HepG2 (cell line): ENCODE measurements at regions of chr3 and their contacts with region 1.

Region 1: DNA sequence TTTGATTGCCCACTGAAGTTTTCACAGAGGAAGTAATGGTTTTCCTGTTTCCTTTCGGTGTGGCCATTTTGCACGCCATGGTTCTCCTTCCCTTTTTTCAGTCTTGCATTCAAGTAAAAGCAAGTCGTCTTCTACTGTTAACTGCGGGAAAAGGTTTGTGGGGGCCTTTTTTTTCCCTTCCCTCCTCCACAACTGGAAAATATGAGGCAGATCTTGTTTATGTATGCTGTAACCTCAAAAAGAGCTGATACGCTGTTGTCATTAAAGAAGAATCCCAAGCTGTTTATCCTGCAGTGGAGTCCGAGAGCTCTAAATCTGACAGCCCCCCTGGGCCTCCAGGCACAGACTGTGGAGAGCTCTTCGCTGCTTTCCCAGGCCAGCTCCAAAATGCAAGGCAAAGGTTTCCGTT is 40.4 kb downstream of the FILIP1L start:
- DNase-seq: no peak
- ATAC-seq: no peak
- H3K4me3 ChIP-seq: no peak overlapping the region
- H3K27ac ChIP-seq: peak overlapping the region; percentile 97
- H3K4me1 ChIP-seq: peaks cover 92% of the 10 kb centered on the region
- H3K27me3 ChIP-seq: no peaks in the 10 kb centered on the region
- CTCF ChIP-seq: no peak
- EP300 ChIP-seq: no peak
- POLR2A ChIP-seq: no peak
- RAD21 ChIP-seq: no peak

Region 2: GRCh38 chr3:99875929-99876841 is 197.7 kb before region 1 on chr3:
- CTCF ChIA-PET with region 1: no interaction called
- POLR2A ChIA-PET with region 1: interaction called, 21 read pairs
- in situ Hi-C with region 1: no loop called
- intact Hi-C with region 1: no loop called
- DNase-seq: peak; percentile 74
- ATAC-seq: peak; percentile 99
- H3K4me3 ChIP-seq: peak overlapping the region; percentile 73 to 92 (median 83)
- H3K27ac ChIP-seq: peak overlapping the region; percentile 86
- H3K4me1 ChIP-seq: peaks cover 44% of the 10 kb centered on the region
- H3K27me3 ChIP-seq: no peaks in the 10 kb centered on the region; a peak in 1 of 5 replicates
- CTCF ChIP-seq: peak; percentile 64
- EP300 ChIP-seq: peak in 1 of 2 experiments; percentile 37; a peak in 2 of 4 replicates
- POLR2A ChIP-seq: peak; percentile 88 to 95
- RAD21 ChIP-seq: peak; percentile 86

Region 3: GRCh38 chr3:99920481-99921376 is 153.2 kb before region 1 on chr3:
- CTCF ChIA-PET with region 1: no interaction called
- POLR2A ChIA-PET with region 1: interaction called, 14 read pairs
- in situ Hi-C with region 1: no loop called
- intact Hi-C with region 1: no loop called
- DNase-seq: peak; percentile 97
- ATAC-seq: peak; percentile 89
- H3K4me3 ChIP-seq: peak overlapping the region in 2 of 3 experiments; percentile 17 to 42; a peak in 1 of 6 replicates
- H3K27ac ChIP-seq: peak overlapping the region; percentile 94
- H3K4me1 ChIP-seq: peaks cover 100% of the 10 kb centered on the region
- H3K27me3 ChIP-seq: no peaks in the 10 kb centered on the region
- CTCF ChIP-seq: peak; percentile 47
- EP300 ChIP-seq: peak; percentile 39 to 95; a peak in 3 of 4 replicates
- POLR2A ChIP-seq: peak; percentile 28 to 58; a peak in 2 of 4 replicates
- RAD21 ChIP-seq: no peak

Region 4: GRCh38 chr3:100060685-100061484 is 13.0 kb before region 1 on chr3:
- CTCF ChIA-PET with region 1: no interaction called
- POLR2A ChIA-PET with region 1: interaction called, 27 read pairs
- in situ Hi-C with region 1: no loop called
- intact Hi-C with region 1: no loop called
- DNase-seq: no peak
- ATAC-seq: no peak
- H3K4me3 ChIP-seq: no peak overlapping the region
- H3K27ac ChIP-seq: no peak overlapping the region
- H3K4me1 ChIP-seq: peaks cover 71% of the 10 kb centered on the region
- H3K27me3 ChIP-seq: no peaks in the 10 kb centered on the region
- CTCF ChIP-seq: no peak
- EP300 ChIP-seq: no peak
- POLR2A ChIP-seq: no peak
- RAD21 ChIP-seq: no peak

Region 5: GRCh38 chr3:100097919-100098783 is 24.2 kb after region 1 on chr3:
- CTCF ChIA-PET with region 1: no interaction called
- POLR2A ChIA-PET with region 1: interaction called, 14 read pairs
- in situ Hi-C with region 1: no loop called
- intact Hi-C with region 1: no loop called
- DNase-seq: peak; percentile 80
- ATAC-seq: peak; percentile 99
- H3K4me3 ChIP-seq: peak overlapping the region in 1 of 3 experiments; percentile 29; a peak in 1 of 6 replicates
- H3K27ac ChIP-seq: peak overlapping the region; percentile 84
- H3K4me1 ChIP-seq: peaks cover 52% of the 10 kb centered on the region
- H3K27me3 ChIP-seq: no peaks in the 10 kb centered on the region
- CTCF ChIP-seq: no peak
- EP300 ChIP-seq: peak in 1 of 2 experiments; percentile 67; a peak in 2 of 4 replicates
- POLR2A ChIP-seq: no peak
- RAD21 ChIP-seq: no peak

Region 6: DNA sequence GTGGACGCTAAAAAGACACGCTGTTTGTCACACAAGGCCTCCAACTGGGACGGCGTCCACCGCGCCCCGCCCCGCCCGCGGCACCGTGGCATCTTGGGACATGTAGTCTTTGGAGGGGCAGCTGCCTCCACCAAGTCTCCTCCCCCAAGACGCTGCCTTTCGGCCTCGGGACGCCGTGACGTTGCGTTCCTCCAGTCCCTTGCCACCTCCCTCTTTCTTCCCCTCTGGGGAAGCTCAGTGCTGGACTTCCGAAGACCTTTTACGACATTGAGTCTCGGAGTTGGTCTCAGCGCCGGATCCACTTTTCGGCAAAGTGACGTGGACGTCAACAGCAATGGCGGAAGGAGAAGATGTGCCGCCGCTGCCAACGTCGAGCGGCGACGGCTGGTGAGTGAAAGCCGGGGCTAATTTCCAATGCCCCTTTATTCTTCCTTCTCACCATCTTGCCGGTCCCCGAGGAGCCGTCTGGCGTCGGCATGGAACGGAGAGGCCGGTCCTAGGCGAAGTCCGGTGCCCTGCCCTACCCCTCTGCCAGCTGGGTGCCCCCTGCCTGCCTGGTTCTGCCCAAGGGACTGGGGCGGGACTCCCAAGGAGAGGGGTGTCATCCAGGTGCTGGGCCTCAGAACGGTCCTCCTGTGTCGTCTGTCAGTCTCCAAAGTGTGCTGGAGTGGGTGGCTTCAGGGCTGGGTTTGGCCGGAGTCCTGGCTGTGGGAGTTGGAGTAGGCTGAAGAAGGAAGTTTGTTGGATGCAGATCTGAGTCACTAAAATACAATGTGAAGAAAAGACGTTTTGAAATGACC is 187.0 kb after region 1 on chr3 and contains the start of gene TBC1D23:
- CTCF ChIA-PET with region 1: no interaction called
- POLR2A ChIA-PET with region 1: interaction called, 23 read pairs
- in situ Hi-C with region 1: no loop called
- intact Hi-C with region 1: no loop called
- DNase-seq: peak; percentile 97
- ATAC-seq: peak; percentile 97
- H3K4me3 ChIP-seq: peak within 1 kb of the TSS; percentile 95 to 98 (median 98)
- H3K27ac ChIP-seq: peak within 1 kb of the TSS; percentile 87
- H3K4me1 ChIP-seq: peaks cover 60% of the 10 kb centered on the region
- H3K27me3 ChIP-seq: no peaks in the 10 kb centered on the region; a peak in 1 of 5 replicates
- CTCF ChIP-seq: peak; percentile 25
- EP300 ChIP-seq: no peak
- POLR2A ChIP-seq: peak; percentile 67 to 79
- RAD21 ChIP-seq: no peak
- total RNA-seq, gene TBC1D23: 28.7 and 44.5 TPM in 2 replicates